HepG2 (cell line): ENCODE measurements at regions of chr3 and their contacts with region 1.

Region 1: GRCh38 chr3:30112902-30113484 is 493.4 kb upstream of the TGFBR2 start:
- DNase-seq: peak; percentile 58
- ATAC-seq: peak; percentile 58; the same call in 1 of the 3 replicates
- H3K4me3 ChIP-seq: no peak overlapping the region
- H3K27ac ChIP-seq: no peak overlapping the region
- H3K4me1 ChIP-seq: peaks cover 22% of the 10 kb centered on the region
- H3K27me3 ChIP-seq: no peaks in the 10 kb centered on the region
- CTCF ChIP-seq: peak; percentile 67
- EP300 ChIP-seq: no peak
- POLR2A ChIP-seq: no peak
- RAD21 ChIP-seq: peak; percentile 43; the same call in 1 of the 2 replicates

Region 2: GRCh38 chr3:30199096-30199759 is 86.2 kb after region 1 on chr3:
- CTCF ChIA-PET with region 1: interaction called, 18 read pairs
- POLR2A ChIA-PET with region 1: no interaction called
- in situ Hi-C with region 1: no loop called
- intact Hi-C with region 1: loop called (anchors 1 kb)
- DNase-seq: peak; percentile 49
- ATAC-seq: peak; percentile 61
- H3K4me3 ChIP-seq: no peak overlapping the region
- H3K27ac ChIP-seq: no peak overlapping the region
- H3K4me1 ChIP-seq: peaks cover 21% of the 10 kb centered on the region
- H3K27me3 ChIP-seq: no peaks in the 10 kb centered on the region; a peak in 1 of 5 replicates
- CTCF ChIP-seq: peak; percentile 72
- EP300 ChIP-seq: no peak
- POLR2A ChIP-seq: no peak
- RAD21 ChIP-seq: peak; percentile 62

Region 3: GRCh38 chr3:30347679-30348216 is 234.8 kb after region 1 on chr3:
- CTCF ChIA-PET with region 1: no interaction called
- POLR2A ChIA-PET with region 1: no interaction called
- in situ Hi-C with region 1: no loop called
- intact Hi-C with region 1: loop called (anchors 10 kb)
- DNase-seq: peak; percentile 87
- ATAC-seq: peak; percentile 66
- H3K4me3 ChIP-seq: no peak overlapping the region; a peak in 1 of 6 replicates
- H3K27ac ChIP-seq: peak overlapping the region; percentile 62
- H3K4me1 ChIP-seq: peaks cover 93% of the 10 kb centered on the region
- H3K27me3 ChIP-seq: no peaks in the 10 kb centered on the region
- CTCF ChIP-seq: no peak
- EP300 ChIP-seq: peak in 1 of 2 experiments; percentile 88; a peak in 2 of 4 replicates
- POLR2A ChIP-seq: no peak
- RAD21 ChIP-seq: no peak

Region 4: DNA sequence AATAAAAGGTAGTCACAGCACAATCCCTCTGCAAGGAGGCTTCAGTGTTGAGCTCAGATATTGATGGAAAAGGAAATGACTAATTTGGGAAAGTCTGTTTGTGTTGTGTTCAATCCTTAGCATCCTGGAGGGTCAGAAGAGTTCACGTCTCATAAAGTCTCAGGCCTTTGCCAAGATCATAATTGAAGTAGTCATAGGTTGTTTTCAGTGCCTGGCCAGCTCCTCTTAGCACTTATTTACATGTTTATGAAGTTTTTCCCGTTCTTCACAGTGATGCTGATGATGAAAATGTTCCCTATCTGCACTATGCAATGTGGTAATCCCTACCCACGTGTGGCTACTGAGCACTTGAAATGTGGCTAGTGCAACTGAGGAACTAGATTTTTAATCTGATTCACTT is 431.8 kb after region 1 on chr3:
- CTCF ChIA-PET with region 1: no interaction called
- POLR2A ChIA-PET with region 1: no interaction called
- in situ Hi-C with region 1: no loop called
- intact Hi-C with region 1: no loop called
- DNase-seq: no peak
- ATAC-seq: no peak
- H3K4me3 ChIP-seq: no peak overlapping the region
- H3K27ac ChIP-seq: no peak overlapping the region
- H3K4me1 ChIP-seq: peaks cover 8% of the 10 kb centered on the region
- H3K27me3 ChIP-seq: no peaks in the 10 kb centered on the region
- CTCF ChIP-seq: no peak
- EP300 ChIP-seq: no peak
- POLR2A ChIP-seq: no peak
- RAD21 ChIP-seq: no peak

Region 5: DNA sequence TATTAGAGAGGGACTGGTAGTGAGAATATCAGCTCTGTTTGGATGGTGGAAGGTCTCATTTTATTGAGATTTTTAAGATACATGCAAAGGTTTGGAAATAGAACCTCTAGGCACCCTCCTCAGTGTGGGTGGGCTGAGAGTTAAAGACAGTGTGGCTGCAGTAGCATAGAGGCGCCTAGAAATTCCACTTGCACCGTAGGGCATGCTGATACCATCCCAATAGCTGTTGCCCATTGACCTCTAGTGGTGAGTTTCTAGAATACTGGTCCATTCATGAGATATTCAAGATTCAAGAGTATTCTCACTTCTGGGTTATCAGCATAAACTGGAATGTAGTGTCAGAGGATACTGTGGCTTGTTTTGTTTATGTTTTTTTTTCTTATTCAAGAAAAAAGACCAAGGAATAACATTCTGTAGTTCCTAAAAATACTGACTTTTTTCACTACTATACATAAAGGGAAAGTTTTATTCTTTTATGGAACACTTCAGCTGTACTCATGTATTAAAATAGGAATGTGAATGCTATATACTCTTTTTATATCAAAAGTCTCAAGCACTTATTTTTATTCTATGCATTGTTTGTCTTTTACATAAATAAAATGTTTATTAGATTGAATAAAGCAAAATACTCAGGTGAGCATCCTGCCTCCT is 580.6 kb after region 1 on chr3:
- CTCF ChIA-PET with region 1: no interaction called
- POLR2A ChIA-PET with region 1: no interaction called
- in situ Hi-C with region 1: no loop called
- intact Hi-C with region 1: loop called (anchors 5 kb)
- DNase-seq: peak; percentile 62
- ATAC-seq: peak; percentile 69
- H3K4me3 ChIP-seq: no peak overlapping the region
- H3K27ac ChIP-seq: peak overlapping the region; percentile 15
- H3K4me1 ChIP-seq: peaks cover 48% of the 10 kb centered on the region
- H3K27me3 ChIP-seq: no peaks in the 10 kb centered on the region
- CTCF ChIP-seq: peak; percentile 73
- EP300 ChIP-seq: no peak
- POLR2A ChIP-seq: no peak; a peak in 1 of 4 replicates
- RAD21 ChIP-seq: peak; percentile 73